ENCODE measurements at regions of chr14 and their contacts with region 1.

Region 1: DNA sequence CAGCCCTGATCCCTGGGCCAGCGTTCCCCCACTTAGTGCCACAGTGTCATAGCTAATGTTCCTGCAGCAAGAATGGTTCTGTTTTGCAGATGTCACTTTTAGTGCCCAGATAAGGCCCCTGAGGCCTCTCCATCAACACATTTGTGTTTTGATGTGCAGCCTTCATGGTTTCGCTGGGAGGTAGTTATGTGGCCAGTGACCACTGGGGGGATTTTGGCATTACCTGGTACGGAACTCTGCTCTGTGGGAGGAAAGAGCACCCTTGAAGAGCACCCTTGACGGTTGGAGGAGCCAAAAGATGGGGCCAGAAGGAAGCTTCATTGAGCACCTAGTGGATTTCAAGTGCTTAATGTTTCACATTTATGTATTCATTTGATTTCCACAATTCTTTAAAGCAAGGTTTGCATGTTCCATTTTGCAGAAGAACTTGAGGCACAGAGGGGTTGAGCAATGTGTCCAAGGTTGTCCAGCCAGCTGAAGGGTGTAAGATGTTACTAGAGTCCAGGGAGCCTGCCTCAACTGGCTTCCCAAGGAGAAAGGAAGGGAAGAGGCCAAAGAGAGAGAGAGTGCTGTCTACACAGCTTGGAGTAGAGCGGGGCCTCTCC is 13.0 kb downstream of the SERPINA11 start:
- DNase-seq: no peak
- ATAC-seq: no peak
- H3K4me3 Mint-ChIP-seq: no peak overlapping the region
- H3K27ac Mint-ChIP-seq: no peak overlapping the region
- H3K4me1 Mint-ChIP-seq: no peaks in the 10 kb centered on the region
- H3K27me3 Mint-ChIP-seq: peaks cover 8% of the 10 kb centered on the region

Region 2: GRCh38 chr14:94548999-94549985 is 109.7 kb after region 1 on chr14:
- CTCF ChIA-PET with region 1: interaction called, 3 read pairs
- POLR2A ChIA-PET with region 1: no interaction called
- intact Hi-C with region 1: loop called (anchors 1 kb)
- DNase-seq: peak; percentile 84
- ATAC-seq: peak; percentile 74
- H3K4me3 Mint-ChIP-seq: no peak overlapping the region
- H3K27ac Mint-ChIP-seq: no peak overlapping the region
- H3K4me1 Mint-ChIP-seq: no peaks in the 10 kb centered on the region
- H3K27me3 Mint-ChIP-seq: peaks cover 29% of the 10 kb centered on the region